ENCODE measurements at regions of chr2 and their contacts with region 1.

Region 1: GRCh38 chr2:43158259-43158880 is 68.0 kb downstream of the ZFP36L2 start:
- DNase-seq: peak; percentile 85
- H3K4me3 Mint-ChIP-seq: peak overlapping the region; percentile 74
- H3K27ac Mint-ChIP-seq: peak overlapping the region; percentile 99
- H3K4me1 Mint-ChIP-seq: peaks cover 59% of the 10 kb centered on the region
- H3K27me3 Mint-ChIP-seq: no peaks in the 10 kb centered on the region

Region 2: GRCh38 chr2:43075054-43075593 is 83.2 kb before region 1 on chr2:
- CTCF ChIA-PET with region 1: no interaction called
- POLR2A ChIA-PET with region 1: no interaction called
- intact Hi-C with region 1: no loop called
- DNase-seq: no peak
- H3K4me3 Mint-ChIP-seq: no peak overlapping the region
- H3K27ac Mint-ChIP-seq: no peak overlapping the region
- H3K4me1 Mint-ChIP-seq: peaks cover under 1% of the 10 kb centered on the region
- H3K27me3 Mint-ChIP-seq: no peaks in the 10 kb centered on the region

Region 3: GRCh38 chr2:43139996-43140621 is 18.3 kb before region 1 on chr2:
- CTCF ChIA-PET with region 1: no interaction called
- POLR2A ChIA-PET with region 1: interaction called, 5 read pairs
- intact Hi-C with region 1: loop called (anchors 1 kb)
- DNase-seq: peak; percentile 9
- H3K4me3 Mint-ChIP-seq: peak overlapping the region; percentile 31
- H3K27ac Mint-ChIP-seq: peak overlapping the region; percentile 85
- H3K4me1 Mint-ChIP-seq: peaks cover 61% of the 10 kb centered on the region
- H3K27me3 Mint-ChIP-seq: no peaks in the 10 kb centered on the region

Region 4: GRCh38 chr2:43169987-43170386 is 11.6 kb after region 1 on chr2:
- CTCF ChIA-PET with region 1: interaction called, 23 read pairs
- POLR2A ChIA-PET with region 1: interaction called, 12 read pairs
- intact Hi-C with region 1: loop called (anchors 1 kb)
- DNase-seq: peak; percentile 88
- H3K4me3 Mint-ChIP-seq: peak overlapping the region; percentile 43
- H3K27ac Mint-ChIP-seq: peak overlapping the region; percentile 85
- H3K4me1 Mint-ChIP-seq: peaks cover 81% of the 10 kb centered on the region
- H3K27me3 Mint-ChIP-seq: no peaks in the 10 kb centered on the region

Region 5: DNA sequence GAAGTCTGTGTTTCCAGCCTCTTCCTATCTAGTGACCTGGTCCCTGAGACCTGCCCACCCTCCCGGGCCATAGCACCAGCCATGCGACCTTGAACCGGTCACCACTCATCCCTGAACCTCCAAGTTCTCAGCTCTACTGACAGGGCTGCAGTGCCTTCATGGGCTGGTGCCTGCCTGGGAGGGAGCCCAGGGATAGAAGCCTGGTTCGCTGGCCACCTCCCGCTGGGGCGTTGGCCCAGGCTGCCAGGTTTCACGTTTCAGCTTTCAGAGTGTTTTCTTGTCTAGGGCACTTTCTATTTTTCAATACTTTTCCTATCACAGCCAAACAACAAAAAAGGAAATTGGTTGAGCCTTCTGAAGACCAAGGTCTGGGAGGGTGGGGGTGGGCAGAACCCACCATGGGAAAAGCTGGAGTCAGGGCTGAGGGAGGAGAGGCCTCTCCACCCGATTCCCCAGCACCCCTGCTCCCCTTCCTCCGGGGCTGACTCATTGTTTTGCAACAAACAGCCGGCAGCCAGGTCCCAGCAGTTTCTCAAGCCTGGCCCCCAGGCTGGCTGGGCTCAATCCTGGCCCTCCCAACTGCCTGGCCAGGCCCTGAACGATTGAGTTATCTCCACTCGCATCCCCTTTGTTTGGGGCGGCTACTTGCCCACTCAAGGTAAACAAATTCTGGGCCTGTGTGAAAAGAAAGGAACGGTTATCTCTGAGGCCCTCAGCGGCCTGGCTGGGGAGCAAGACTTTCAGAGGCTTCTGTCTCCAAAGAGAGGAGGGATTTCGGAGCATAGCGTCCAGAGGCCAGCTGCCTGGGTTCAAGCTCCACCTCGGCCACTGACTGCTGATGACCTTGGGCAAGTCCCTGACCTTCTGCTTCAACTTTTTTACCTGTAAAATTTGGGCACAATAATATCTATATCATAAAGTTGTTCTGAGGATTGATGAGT is 20.5 kb after region 1 on chr2:
- CTCF ChIA-PET with region 1: no interaction called
- POLR2A ChIA-PET with region 1: interaction called, 6 read pairs
- intact Hi-C with region 1: loop called (anchors 1 kb)
- DNase-seq: peak; percentile 61
- H3K4me3 Mint-ChIP-seq: peak overlapping the region; percentile 29
- H3K27ac Mint-ChIP-seq: peak overlapping the region; percentile 87
- H3K4me1 Mint-ChIP-seq: peaks cover 69% of the 10 kb centered on the region
- H3K27me3 Mint-ChIP-seq: no peaks in the 10 kb centered on the region

Region 6: DNA sequence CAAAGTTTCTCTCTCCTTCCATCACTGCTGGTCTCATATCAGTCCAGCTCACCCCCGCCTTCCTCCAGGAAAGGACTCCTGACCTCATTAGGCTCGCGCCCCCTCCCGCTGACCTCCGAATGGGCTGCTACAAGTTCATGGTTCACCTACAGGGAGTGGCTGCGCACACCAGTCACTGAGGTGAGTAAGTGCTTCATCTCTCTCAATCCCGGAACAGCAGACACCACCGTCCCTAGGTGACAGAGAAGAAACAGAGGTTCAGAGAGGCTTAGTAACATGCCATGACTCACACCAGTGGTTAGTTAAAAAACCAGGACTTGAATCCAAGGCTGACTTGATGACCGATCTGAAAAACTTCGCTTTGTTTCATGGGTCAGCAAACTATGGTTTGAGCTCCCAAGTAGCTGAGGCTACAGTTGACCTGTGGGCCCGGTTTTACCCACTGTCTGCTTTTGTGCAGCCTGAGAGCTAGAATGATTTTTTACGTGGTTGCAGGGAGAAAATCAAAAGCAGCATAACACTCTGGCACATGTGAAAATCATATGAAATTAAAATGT is 26.0 kb after region 1 on chr2:
- CTCF ChIA-PET with region 1: no interaction called
- POLR2A ChIA-PET with region 1: no interaction called
- intact Hi-C with region 1: loop called (anchors 2 kb)
- DNase-seq: peak; percentile 85
- H3K4me3 Mint-ChIP-seq: peak overlapping the region; percentile 48
- H3K27ac Mint-ChIP-seq: peak overlapping the region; percentile 85
- H3K4me1 Mint-ChIP-seq: peaks cover 50% of the 10 kb centered on the region
- H3K27me3 Mint-ChIP-seq: no peaks in the 10 kb centered on the region

Region 7: GRCh38 chr2:43194121-43194869 is 35.9 kb after region 1 on chr2:
- CTCF ChIA-PET with region 1: interaction called, 4 read pairs
- POLR2A ChIA-PET with region 1: interaction called, 3 read pairs
- intact Hi-C with region 1: loop called (anchors 1 kb)
- DNase-seq: no peak
- H3K4me3 Mint-ChIP-seq: peak overlapping the region; percentile 77
- H3K27ac Mint-ChIP-seq: peak overlapping the region; percentile 97
- H3K4me1 Mint-ChIP-seq: peaks cover 57% of the 10 kb centered on the region
- H3K27me3 Mint-ChIP-seq: no peaks in the 10 kb centered on the region

Region 8: DNA sequence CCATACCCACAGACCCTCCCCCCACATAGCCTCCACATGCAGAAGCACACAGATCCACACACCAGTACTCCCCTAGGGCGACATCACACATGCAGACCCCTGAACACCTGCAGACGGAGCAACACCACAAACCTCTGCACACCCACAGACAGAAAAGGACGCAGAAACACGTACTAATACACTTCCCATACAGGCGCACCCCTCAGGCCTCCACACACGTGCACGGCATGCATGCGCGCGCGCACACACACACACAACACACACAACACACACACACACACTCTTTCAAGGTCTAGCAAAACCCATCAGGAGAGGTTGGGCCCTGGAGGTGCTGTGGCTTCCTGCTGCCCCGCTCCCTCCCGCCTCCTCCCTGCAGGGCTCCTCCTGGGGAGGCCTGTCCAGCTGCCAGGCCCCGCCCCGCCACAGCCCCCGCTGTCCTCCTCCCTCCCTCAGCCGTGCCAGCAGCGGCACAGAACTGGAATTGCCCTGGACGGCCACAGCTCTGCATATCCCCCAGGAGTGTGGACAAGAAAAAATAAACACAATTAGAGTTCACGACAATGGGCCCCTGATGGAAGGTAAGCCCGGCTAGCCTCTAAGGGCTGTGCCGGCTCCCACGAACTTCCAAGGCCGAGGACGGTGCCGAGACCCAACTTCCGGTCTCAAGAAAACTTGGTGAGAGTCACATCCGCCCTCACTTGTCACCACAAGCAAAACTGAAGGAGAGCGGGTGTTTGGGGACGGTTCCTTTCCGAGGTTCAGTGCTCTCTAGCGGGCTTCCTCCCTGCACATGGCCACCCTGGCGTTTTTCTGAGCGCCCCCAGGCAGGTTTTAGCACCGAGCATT is 61.2 kb after region 1 on chr2:
- CTCF ChIA-PET with region 1: interaction called, 3 read pairs
- POLR2A ChIA-PET with region 1: interaction called, 4 read pairs
- intact Hi-C with region 1: loop called (anchors 1 kb)
- DNase-seq: peak; percentile 89
- H3K4me3 Mint-ChIP-seq: peak overlapping the region; percentile 88
- H3K27ac Mint-ChIP-seq: peak overlapping the region; percentile 95
- H3K4me1 Mint-ChIP-seq: peaks cover 42% of the 10 kb centered on the region
- H3K27me3 Mint-ChIP-seq: no peaks in the 10 kb centered on the region

Measured in activated CD4-positive, alpha-beta memory T cell treated with anti-CD3 and anti-CD28 coated beads for 36 hours (primary cell).